OCI-LY7 (cell line): ENCODE measurements at regions of chr6 and their contacts with region 1.

Region 1: GRCh38 chr6:83514866-83515466 is 2.6 kb downstream of the PRSS35 start:
- DNase-seq: peak; percentile 50
- H3K4me3 ChIP-seq: no peak overlapping the region
- H3K27ac ChIP-seq: no peak overlapping the region
- H3K4me1 ChIP-seq: no peaks in the 10 kb centered on the region
- CTCF ChIP-seq: peak; percentile 91

Region 2: DNA sequence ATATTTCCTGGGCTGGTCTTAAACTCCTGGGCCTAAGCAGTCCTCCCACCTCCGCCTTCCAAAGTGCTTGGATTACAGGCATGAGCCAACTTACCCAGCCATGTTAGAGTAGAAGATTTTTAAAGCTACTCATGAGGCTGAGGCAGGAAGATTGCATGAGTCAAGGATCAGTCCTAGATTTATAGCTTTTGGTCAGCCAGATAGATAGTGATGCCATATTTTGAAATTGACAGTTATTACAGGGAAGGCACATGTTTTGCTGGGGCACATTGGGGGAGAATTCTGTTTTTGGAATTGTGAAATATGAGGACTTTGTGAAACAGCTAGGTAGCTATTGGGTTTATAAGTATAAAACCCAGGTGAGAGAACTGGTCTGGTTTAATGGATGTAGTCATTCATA is 406.6 kb before region 1 on chr6:
- CTCF ChIA-PET with region 1: no interaction called
- POLR2A ChIA-PET with region 1: no interaction called
- intact Hi-C with region 1: no loop called
- DNase-seq: no peak
- H3K4me3 ChIP-seq: no peak overlapping the region
- H3K27ac ChIP-seq: no peak overlapping the region
- H3K4me1 ChIP-seq: peaks cover 10% of the 10 kb centered on the region
- CTCF ChIP-seq: no peak

Region 3: GRCh38 chr6:83221889-83222479 is 293.0 kb before region 1 on chr6:
- CTCF ChIA-PET with region 1: interaction called, 11 read pairs
- POLR2A ChIA-PET with region 1: no interaction called
- intact Hi-C with region 1: loop called (anchors 1 kb)
- DNase-seq: peak; percentile 49
- H3K4me3 ChIP-seq: no peak overlapping the region
- H3K27ac ChIP-seq: no peak overlapping the region
- H3K4me1 ChIP-seq: no peaks in the 10 kb centered on the region
- CTCF ChIP-seq: peak; percentile 85

Region 4: DNA sequence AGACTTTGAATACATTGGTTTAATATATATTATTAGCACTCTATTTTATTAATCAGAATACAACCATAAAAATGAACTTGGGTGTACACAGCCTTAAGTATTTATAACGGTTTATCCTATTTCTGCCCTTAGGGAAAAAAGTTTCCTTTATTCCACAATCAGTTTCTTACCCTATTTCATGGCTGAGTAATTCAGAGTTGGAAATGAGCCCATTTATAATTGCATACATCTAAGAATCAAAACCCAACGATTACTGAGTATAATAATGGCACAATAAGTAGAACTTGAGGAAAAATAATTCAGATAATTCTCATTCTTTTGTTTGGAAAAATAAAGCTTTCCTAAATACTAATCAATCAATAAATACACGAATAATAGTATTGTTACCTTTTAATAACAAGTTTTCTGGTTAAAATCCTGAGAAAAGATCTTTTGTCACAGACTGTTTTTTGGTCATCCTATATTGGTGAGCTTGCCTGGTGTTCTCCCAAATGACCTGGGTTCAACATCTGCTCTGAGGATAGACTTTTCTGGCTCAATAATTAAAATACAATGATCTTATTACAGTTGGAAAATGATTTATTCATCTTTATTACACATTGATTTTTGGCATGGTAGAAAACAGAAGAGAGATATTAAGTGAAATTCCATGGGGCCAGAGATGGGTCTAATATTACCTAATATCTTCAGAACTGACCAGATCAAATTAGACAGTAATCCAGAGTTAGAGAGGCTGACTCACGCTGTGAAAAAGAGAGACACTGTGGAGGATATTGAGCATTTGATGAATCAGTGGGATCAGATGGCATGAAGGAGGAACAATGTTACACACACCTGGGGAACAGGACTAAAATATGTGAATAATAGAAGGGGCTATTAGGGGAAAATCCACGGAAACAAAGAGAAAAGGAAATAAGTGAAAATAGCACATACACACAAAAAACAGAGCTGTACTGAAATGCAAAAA is 1411.5 kb after region 1 on chr6:
- CTCF ChIA-PET with region 1: no interaction called
- POLR2A ChIA-PET with region 1: no interaction called
- intact Hi-C with region 1: no loop called
- DNase-seq: no peak
- H3K4me3 ChIP-seq: no peak overlapping the region
- H3K27ac ChIP-seq: no peak overlapping the region
- H3K4me1 ChIP-seq: no peaks in the 10 kb centered on the region
- CTCF ChIP-seq: no peak